GM12878 (cell line): ENCODE measurements at regions of chr1 and their contacts with region 1.

Region 1: DNA sequence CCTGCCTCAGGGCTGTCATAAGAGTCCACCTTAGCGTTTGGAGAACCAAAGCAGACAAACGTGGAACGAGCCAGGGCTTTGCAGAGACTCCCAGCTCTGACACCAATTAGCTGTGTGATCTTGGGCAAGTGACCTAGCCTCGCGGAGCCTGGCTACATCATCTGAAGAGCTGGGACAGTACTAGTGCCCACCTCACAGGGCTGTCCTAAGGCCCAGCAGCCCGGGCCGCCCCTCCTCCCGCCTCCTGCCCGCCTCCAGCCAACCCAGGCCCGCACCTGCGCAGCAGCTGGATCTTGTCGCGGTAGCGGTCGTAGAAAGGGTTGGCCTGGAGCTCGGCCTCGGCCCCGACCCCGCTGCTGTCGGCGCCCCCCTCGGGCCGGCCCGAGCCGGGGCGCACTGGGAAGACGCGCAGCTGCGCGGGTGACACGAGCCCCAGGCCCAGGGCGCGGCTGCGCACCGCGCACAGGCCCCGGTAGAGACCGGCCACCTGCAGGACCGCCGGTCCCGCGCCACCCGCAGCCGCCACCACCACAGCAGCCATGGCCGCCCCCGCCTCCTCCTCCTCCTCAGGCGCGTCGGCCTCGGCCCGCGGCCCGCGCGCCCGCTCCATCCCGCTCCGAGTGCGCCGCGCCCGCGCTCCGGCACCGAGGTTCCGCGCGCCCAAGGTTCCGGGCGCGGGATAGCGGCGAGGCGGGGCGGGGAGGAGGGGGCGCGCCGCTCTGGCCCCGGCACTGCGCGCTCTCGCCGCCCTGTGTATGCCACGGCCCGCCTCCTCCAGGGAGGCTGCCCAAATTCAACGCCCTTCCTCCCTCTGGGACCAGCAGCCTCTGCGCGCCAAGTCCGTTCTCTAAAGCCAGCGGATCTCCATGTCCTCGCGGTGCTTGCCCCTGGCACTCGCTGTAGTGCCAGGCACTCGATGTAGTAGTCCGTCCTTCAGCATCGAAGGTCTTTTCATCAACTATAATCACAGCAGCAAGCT is at the start of gene ATPAF1:
- DNase-seq: peak; percentile 34
- ATAC-seq: peak; percentile 92
- H3K4me3 ChIP-seq: peak within 1 kb of the TSS; percentile 89
- H3K27ac ChIP-seq: peak within 1 kb of the TSS; percentile 47
- H3K4me1 ChIP-seq: peaks cover 13% of the 10 kb centered on the region
- H3K27me3 ChIP-seq: no peaks in the 10 kb centered on the region
- CTCF ChIP-seq: no peak
- EP300 ChIP-seq: no peak
- POLR2A ChIP-seq: peak; percentile 84
- RAD21 ChIP-seq: no peak
- polyA plus RNA-seq, gene ATPAF1: 15.2 to 32.6 TPM

Region 2: DNA sequence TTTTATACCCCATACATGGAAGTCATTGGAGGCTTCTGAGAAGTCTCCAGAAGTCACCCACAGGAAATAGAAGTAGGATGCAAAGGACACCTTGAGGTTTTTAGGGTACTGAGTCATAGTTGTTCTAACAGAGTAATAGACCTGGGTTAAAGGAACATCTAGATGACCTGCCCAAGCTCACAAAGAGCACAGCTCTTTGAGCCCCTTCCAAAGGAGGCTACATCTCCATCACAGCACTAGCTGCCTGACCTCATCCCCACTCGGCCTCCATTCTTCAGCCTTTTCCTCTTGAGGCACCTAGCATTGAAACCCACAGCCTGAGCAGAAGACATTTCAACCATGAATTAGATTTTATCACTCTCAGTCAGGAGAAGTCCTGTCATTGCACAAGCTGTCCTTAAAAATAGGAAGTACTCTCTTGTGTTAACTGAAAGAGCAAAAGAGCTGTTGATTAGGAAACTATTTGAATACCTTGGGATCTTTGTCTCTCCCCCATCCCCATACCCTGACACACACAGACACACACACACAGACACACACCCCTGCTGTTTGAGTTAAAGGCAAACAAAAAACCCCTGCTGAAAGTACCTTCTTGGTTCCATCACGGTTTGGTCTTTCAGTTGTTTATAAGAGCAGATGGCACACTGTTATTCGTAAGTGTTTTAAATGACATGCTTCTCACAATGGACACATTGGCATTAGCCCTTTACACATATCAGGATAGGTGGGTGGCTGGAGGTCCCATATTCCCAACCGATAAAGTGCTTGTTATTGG is 86.2 kb before region 1 on chr1:
- CTCF ChIA-PET with region 1: no interaction called
- POLR2A ChIA-PET with region 1: no interaction called
- RAD21 ChIA-PET with region 1: no interaction called
- SMC1A ChIA-PET with region 1: no interaction called
- in situ Hi-C with region 1: no loop called
- intact Hi-C with region 1: no loop called
- DNase-seq: no peak
- ATAC-seq: no peak; the same call in 2 of the 3 replicates
- H3K4me3 ChIP-seq: no peak overlapping the region
- H3K27ac ChIP-seq: peak overlapping the region; percentile 44; the same call in 1 of the 2 replicates
- H3K4me1 ChIP-seq: no peaks in the 10 kb centered on the region; the same call in 1 of the 2 replicates
- H3K27me3 ChIP-seq: no peaks in the 10 kb centered on the region
- CTCF ChIP-seq: no peak
- EP300 ChIP-seq: no peak
- POLR2A ChIP-seq: no peak
- RAD21 ChIP-seq: no peak

Region 3: DNA sequence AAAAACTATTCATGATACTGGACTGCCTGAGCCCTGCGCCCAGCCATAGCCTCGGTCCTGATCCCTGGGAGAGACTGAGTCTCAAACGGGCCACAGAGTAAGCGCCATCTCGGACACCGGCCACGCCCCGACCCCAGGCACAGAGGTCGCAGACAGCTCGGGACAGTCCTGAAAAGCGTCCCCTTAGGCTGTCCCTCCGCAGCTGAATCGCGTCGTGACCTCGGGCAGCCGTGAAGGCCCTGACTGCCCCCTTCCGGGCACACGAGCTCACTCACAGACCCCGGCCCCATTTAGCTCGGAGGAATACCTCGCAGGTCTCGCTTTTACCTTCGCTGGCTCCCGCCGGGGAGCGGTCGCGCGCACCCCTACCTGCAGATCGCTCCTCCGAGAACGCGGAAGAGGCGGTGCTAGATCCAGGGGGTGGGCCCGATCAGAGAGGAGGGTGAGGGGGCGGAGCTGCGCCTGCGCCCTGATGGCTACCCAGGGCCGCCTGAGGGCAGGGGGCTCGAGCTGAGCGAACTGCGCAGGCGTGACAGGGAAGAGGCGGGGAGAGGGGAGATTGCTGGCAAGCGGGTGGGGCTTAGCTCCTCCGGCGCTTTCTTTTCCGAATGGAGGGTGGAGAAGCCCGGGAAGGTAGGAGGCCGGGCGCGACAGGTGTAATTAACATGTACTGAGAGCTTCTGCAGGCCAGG is 64.1 kb before region 1 on chr1 and contains the start of gene MKNK1:
- CTCF ChIA-PET with region 1: no interaction called
- POLR2A ChIA-PET with region 1: interaction called, 6 read pairs
- RAD21 ChIA-PET with region 1: interaction called, 8 read pairs
- SMC1A ChIA-PET with region 1: interaction called, 3 read pairs
- in situ Hi-C with region 1: no loop called
- intact Hi-C with region 1: loop called (anchors 5 kb)
- DNase-seq: peak; percentile 87
- ATAC-seq: peak; percentile 98
- H3K4me3 ChIP-seq: peak within 1 kb of the TSS; percentile 67
- H3K27ac ChIP-seq: peak within 1 kb of the TSS; percentile 74
- H3K4me1 ChIP-seq: 0 out of 2 replicates have a peak, but pooled peaks cover 3% of the 10 kb centered on the region
- H3K27me3 ChIP-seq: no peaks in the 10 kb centered on the region
- CTCF ChIP-seq: 0 out of 6 replicates have a peak, but pooled peaks of 1 of the 3 experiments have one; percentile 9
- EP300 ChIP-seq: no peak
- POLR2A ChIP-seq: peak; percentile 96
- RAD21 ChIP-seq: 0 out of 2 replicates have a peak, but pooled peaks have one; percentile 2
- polyA plus RNA-seq, gene MKNK1: 13.7 to 17.0 TPM

Region 4: GRCh38 chr1:46718727-46719622 is 50.9 kb after region 1 on chr1 and contains the start of gene EFCAB14:
- CTCF ChIA-PET with region 1: interaction called, 3 read pairs
- POLR2A ChIA-PET with region 1: no interaction called
- RAD21 ChIA-PET with region 1: interaction called, 5 read pairs
- SMC1A ChIA-PET with region 1: interaction called, 8 read pairs
- in situ Hi-C with region 1: no loop called
- intact Hi-C with region 1: loop called (anchors 2 kb)
- DNase-seq: peak; percentile 91
- ATAC-seq: peak; percentile 99
- H3K4me3 ChIP-seq: peak within 1 kb of the TSS; percentile 83
- H3K27ac ChIP-seq: peak within 1 kb of the TSS; percentile 87
- H3K4me1 ChIP-seq: peaks cover 13% of the 10 kb centered on the region
- H3K27me3 ChIP-seq: no peaks in the 10 kb centered on the region; a peak in 1 of 4 replicates
- CTCF ChIP-seq: no peak
- EP300 ChIP-seq: no peak
- POLR2A ChIP-seq: peak; percentile 96
- RAD21 ChIP-seq: no peak
- polyA plus RNA-seq, gene EFCAB14: 7.8 to 12.7 TPM

Region 5: DNA sequence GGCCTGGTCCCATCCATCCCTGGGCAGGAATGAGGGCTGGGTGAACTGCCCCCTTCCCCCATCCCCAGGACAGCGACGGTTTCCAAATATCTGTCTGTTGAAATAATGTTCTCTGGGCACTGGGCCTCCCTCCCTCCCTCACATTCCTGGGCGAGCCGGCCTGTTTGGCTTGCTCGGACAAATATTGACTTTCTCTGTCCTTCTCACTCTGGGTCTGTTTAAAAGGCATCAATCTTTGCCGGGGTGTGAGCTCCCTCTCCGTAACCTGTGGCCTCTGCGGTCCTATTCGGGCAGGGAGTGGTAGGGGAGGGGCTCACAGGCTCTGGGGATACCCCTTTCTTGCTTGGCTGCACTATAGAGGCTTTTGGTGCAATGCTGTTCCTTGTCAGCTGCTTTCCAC is 810.0 kb after region 1 on chr1:
- CTCF ChIA-PET with region 1: no interaction called
- POLR2A ChIA-PET with region 1: no interaction called
- RAD21 ChIA-PET with region 1: no interaction called
- SMC1A ChIA-PET with region 1: no interaction called
- in situ Hi-C with region 1: no loop called
- intact Hi-C with region 1: no loop called
- DNase-seq: no peak
- ATAC-seq: no peak
- H3K4me3 ChIP-seq: no peak overlapping the region
- H3K27ac ChIP-seq: no peak overlapping the region
- H3K4me1 ChIP-seq: no peaks in the 10 kb centered on the region
- H3K27me3 ChIP-seq: no peaks in the 10 kb centered on the region; a peak in 1 of 4 replicates
- CTCF ChIP-seq: no peak
- EP300 ChIP-seq: no peak
- POLR2A ChIP-seq: no peak
- RAD21 ChIP-seq: no peak